ENCODE measurements at regions of chr1 and their contacts with region 1.

Region 1: DNA sequence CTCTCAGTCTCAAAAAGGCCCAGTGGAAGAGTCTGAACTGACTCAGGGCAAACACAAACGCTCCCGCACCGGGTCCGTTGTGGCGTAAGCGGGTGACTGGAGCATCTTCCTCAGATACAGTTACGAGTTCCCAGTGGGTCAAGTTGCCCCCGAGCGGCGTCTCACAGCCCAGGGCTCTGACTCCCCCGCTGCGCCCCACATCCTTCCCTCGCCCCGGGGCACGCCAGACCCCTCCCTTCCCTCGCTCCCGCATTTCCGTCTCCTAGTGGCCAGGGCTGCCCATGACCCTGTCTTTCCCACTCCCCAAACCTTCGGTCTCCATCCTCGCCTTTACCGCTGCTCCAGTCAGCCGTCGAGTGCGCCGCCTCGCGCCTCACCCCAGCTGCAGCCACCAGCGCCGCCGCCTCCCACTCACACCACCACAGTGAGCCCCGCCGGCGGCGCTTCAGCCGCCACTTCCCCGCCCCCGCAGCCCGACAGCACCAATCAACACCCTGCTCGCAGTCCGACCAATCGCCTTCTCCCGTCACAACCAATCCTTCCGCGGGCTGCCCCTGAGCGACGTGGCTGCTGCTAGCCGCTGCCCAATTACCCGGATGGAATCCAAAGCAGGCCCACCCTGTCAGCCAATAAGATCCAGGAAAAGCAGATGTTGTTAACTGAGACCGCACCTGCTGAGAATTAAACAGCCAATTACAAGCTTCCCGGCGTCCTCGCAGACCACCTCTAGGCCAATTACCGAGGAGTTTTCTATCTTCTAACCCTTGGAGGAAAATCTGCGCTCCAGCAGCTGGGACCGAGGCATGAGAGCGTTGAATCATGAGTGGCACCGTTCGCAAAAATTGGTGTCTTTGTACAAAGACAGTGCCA is at the start of gene TDRKH:
- DNase-seq: peak; percentile 98
- ATAC-seq: peak; percentile 98
- H3K4me3 ChIP-seq: peak within 1 kb of the TSS; percentile 68 to 86 (median 79)
- H3K27ac ChIP-seq: peak within 1 kb of the TSS; percentile 71
- H3K4me1 ChIP-seq: peaks cover 24% of the 10 kb centered on the region
- H3K27me3 ChIP-seq: no peaks in the 10 kb centered on the region
- CTCF ChIP-seq: peak; percentile 72
- EP300 ChIP-seq: 0 out of 4 replicates have a peak, but pooled peaks of 1 of the 2 experiments have one; percentile 1
- POLR2A ChIP-seq: peak in 1 of 2 experiments; percentile 78; a peak in 2 of 4 replicates
- RAD21 ChIP-seq: peak; percentile 39; the same call in 1 of the 2 replicates
- total RNA-seq, gene TDRKH: 5.4 and 5.6 TPM in 2 replicates

Region 2: DNA sequence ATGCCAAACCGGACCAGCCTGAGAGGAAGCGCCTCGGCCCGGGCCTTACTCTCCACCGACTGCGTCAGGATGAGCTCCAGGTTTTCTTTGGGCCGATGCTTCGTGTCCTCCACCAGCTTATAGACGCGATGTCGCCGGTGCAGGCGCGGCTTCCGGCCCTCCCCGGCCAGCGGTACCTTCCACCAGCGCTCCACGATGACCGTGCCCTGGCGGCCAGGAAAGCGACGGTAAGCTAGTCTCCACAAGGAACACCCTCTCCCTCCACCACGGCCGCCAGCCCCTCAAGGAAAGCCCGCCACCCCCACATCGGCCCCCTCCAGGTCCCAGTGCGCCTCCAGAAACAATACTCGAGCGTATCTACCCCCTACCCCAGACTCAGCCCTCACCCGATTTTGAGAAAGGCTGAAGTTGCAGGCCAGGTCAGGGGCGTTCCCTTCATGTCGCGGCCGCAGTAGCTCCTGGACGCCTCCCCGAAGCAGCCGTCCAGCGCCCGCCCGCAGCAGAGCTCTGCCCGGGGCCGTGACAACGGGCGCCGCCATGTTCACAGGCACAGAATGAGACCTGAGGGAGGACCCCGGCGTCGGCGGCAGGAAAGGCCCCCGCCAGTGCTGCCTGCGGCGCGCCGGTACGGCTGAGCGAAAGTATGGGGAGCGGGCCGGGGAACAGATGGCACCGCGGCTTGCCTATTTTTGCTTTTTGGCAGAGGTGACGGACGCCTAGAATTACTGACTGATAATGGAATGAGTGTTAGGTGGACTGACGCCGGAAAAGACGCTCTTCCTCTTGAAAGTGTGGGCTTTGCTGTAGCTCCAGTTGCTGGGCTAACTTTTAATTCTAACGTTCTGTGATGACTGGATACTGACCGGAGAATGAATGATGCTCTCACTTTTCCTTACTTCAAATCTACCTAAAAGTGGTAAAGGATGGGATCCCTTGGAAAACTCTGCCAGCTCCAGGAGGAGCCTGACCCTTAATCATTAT is 27.1 kb before region 1 on chr1 and contains the start of gene MRPL9:
- CTCF ChIA-PET with region 1: no interaction called
- POLR2A ChIA-PET with region 1: interaction called, 21 read pairs
- in situ Hi-C with region 1: no loop called
- intact Hi-C with region 1: no loop called
- DNase-seq: peak; percentile 60
- ATAC-seq: peak; percentile 99
- H3K4me3 ChIP-seq: peak within 1 kb of the TSS; percentile 72 to 95 (median 92)
- H3K27ac ChIP-seq: peak within 1 kb of the TSS; percentile 83
- H3K4me1 ChIP-seq: peaks cover 24% of the 10 kb centered on the region
- H3K27me3 ChIP-seq: no peaks in the 10 kb centered on the region; a peak in 1 of 5 replicates
- CTCF ChIP-seq: no peak; the same call in 1 of the 2 replicates
- EP300 ChIP-seq: no peak
- POLR2A ChIP-seq: peak; percentile 69 to 72
- RAD21 ChIP-seq: no peak
- total RNA-seq, gene MRPL9: 107 and 119 TPM in 2 replicates

Region 3: DNA sequence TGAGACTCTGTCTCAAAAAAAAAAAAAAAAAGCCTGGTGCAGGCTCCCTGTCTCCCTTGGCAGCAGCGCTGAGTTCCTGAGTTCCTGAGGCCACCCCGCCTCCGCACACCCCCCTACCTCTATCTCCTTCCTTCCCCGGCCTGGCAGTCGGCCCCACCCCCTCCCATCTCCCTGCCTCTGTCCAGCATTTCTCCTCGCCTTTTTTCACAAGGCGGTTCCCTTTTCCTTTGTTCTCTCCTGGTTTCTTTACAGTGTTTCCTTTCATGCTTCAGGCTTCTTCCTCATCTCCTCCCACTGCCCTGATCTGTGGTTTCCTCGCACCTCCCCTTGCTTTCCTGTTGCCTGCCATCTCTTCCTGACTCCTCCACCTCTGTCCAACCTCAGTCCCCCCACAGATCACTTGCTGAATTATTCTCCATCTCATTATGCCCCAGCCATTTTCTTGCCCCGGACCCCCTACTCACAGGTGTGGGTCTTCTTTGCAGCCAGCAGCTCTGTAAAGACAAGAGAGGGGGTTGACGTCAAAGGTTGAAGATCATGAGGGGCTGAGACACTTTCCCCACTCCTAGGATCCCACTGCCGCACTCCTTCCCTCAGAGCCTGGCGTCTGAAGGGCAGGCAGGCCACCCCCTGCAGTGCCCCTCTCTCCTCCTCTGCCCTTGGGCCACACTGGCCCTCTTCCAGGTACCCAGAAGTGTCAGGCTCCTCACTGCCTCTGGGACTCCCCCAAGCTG is 38.8 kb after region 1 on chr1:
- CTCF ChIA-PET with region 1: no interaction called
- POLR2A ChIA-PET with region 1: interaction called, 4 read pairs
- in situ Hi-C with region 1: no loop called
- intact Hi-C with region 1: loop called (anchors 5 kb)
- DNase-seq: no peak
- ATAC-seq: no peak
- H3K4me3 ChIP-seq: no peak overlapping the region
- H3K27ac ChIP-seq: no peak overlapping the region
- H3K4me1 ChIP-seq: peaks cover 42% of the 10 kb centered on the region
- H3K27me3 ChIP-seq: no peaks in the 10 kb centered on the region; a peak in 2 of 5 replicates
- CTCF ChIP-seq: no peak
- EP300 ChIP-seq: no peak
- POLR2A ChIP-seq: no peak
- RAD21 ChIP-seq: no peak